Prostate gland (tissue), 2 donors: ENCODE measurements at regions of chr22 and their contacts with region 1.

Region 1: DNA sequence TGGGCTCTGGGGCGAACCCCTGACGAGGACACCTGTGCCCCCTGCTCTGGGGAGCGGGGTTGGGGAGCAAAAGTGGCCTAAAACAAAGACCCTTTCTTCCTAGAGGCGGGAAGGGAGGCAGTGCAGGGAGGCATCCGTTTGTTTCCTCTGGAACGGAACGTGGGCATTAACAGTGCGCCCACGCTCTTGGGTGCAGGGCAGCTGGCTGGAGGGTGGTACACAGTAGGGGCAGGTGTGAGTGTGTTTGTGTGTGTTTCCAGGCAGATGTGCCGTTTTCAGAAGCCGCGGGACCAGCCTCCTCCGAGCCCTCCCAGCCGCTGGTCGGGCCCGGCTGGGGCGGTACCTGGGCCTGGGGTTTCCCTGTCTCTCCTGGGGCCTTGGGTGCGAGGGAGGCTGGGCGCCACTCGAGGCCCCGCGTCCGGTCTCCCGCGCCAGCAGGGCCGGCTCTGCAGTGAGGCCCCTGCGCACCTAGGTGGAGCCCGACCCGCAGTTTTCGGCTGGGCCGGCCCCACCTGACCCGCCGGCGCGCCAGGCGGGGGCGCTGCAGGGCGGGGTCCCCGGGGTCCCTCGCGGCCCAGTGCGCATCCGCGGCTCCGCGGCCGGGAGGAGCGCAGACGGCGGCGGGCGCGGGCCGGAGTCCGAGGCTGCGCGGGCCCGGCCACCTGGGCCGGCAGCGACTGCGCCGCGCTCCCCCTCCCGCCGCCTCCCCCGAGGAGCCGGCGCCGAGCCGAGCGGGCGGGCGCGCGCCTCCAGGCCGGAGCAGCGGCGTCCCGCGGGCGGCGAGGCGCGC is 1252.7 kb downstream of the BRD1 start:
- DNase-seq: peak; percentile 40
- H3K4me3 ChIP-seq: no peak overlapping the region
- H3K27ac ChIP-seq: no peak overlapping the region
- H3K4me1 ChIP-seq: no peaks in the 10 kb centered on the region
- H3K27me3 ChIP-seq: no peaks in the 10 kb centered on the region
- CTCF ChIP-seq: peak; percentile 18 to 81 (median 54)
- POLR2A ChIP-seq: no peak

Region 2: GRCh38 chr22:48618326-48618725 is 43.4 kb after region 1 on chr22:
- intact Hi-C with region 1: no loop called
- DNase-seq: peak; percentile 87
- H3K4me3 ChIP-seq: no peak overlapping the region
- H3K27ac ChIP-seq: peak overlapping the region in 1 of 2 donors; percentile 52
- H3K4me1 ChIP-seq: peaks cover 13% of the 10 kb centered on the region
- H3K27me3 ChIP-seq: no peaks in the 10 kb centered on the region
- CTCF ChIP-seq: no peak
- POLR2A ChIP-seq: no peak

Region 3: GRCh38 chr22:48837341-48837935 is 262.5 kb after region 1 on chr22:
- intact Hi-C with region 1: no loop called
- DNase-seq: no peak
- H3K4me3 ChIP-seq: no peak overlapping the region
- H3K27ac ChIP-seq: no peak overlapping the region
- H3K4me1 ChIP-seq: no peaks in the 10 kb centered on the region
- H3K27me3 ChIP-seq: peaks cover 2% of the 10 kb centered on the region
- CTCF ChIP-seq: no peak
- POLR2A ChIP-seq: no peak

Region 4: GRCh38 chr22:48886604-48887393 is 311.8 kb after region 1 on chr22:
- intact Hi-C with region 1: no loop called
- DNase-seq: no peak
- H3K4me3 ChIP-seq: no peak overlapping the region
- H3K27ac ChIP-seq: no peak overlapping the region
- H3K4me1 ChIP-seq: no peaks in the 10 kb centered on the region
- H3K27me3 ChIP-seq: peaks cover 2% of the 10 kb centered on the region
- CTCF ChIP-seq: no peak
- POLR2A ChIP-seq: no peak

Region 5: DNA sequence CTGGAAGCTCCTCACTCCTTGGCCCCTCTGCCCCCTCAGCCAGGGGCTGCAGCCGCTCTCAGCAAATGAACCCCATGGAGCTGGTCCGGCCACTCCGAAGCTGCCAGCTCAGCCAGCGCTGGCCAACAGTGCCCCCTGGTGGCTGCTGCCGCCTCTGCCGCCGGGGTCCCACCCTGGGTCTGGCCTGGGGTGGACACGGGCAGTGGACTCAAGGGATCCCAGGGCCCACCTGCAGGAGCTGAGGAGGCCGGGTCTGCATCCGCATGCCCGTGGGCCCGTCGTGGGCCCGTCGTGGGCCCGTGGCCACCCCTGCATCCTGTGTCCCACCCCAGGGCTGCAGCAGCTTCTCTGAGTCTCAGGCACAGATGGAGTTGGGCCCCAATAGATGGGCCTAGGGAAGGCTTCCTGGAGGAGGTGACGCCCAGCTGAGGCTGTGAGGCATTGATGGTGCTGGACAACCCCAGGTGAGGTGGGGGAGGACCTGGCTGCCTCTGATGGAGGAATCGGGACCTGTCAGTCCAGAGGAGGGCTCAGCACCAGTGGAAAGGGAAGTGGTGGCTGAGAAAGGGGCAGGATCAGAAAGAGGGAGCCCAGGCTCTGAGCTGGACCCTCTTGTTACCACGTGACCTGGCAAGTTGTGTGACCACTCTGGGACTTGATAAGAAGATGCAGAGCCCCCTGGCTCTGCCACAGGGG is 730.4 kb after region 1 on chr22:
- intact Hi-C with region 1: loop called (anchors 5 kb)
- DNase-seq: peak; percentile 29
- H3K4me3 ChIP-seq: no peak overlapping the region
- H3K27ac ChIP-seq: no peak overlapping the region
- H3K4me1 ChIP-seq: no peaks in the 10 kb centered on the region
- H3K27me3 ChIP-seq: peaks cover 10% of the 10 kb centered on the region
- CTCF ChIP-seq: peak; percentile 74 to 93 (median 84)
- POLR2A ChIP-seq: no peak

Region 6: DNA sequence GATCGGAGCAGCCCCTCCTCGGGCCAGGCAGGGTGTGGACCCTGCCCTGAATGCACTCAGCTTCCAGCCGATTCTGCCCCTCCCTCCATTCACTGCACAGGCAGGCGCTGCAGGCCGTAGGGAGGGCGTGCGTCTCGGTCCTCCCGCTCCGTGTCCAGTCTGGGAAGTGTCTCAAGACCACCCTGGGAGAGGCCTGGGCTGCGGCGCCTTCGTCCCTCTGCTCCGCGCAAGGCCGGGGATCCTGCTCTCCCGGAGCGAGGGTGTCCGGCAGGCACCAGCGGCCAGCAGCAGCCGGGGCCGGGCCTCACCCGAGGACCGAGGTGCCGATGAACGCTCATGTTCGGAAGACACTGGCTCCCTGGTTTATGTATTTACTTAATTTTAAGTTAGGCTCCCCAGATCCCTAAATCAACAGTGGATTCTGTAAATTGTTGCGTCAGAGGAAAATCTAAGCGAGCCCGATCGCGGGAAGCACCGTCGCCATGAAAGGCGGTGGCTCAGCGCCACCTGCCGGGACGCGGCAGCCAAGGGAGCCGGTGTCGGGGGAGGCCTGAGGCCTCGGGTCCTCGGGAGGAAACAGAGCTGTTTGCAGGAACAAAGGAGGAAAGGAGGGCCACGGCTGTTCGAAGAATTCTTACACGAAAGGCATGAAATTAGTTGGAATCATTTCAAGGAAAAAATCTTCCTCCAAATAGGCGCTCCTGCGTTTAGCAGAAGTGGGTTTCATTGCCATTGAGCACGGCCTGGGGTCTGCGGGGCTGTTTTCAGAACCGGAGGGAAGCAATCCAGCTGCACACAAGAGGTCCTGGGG is 1057.4 kb after region 1 on chr22:
- intact Hi-C with region 1: loop called (anchors 10 kb)
- DNase-seq: peak; percentile 39
- H3K4me3 ChIP-seq: peak overlapping the region; percentile 12 to 23
- H3K27ac ChIP-seq: no peak overlapping the region
- H3K4me1 ChIP-seq: no peaks in the 10 kb centered on the region
- H3K27me3 ChIP-seq: peaks cover 7% of the 10 kb centered on the region
- CTCF ChIP-seq: peak; percentile 61 to 78 (median 71)
- POLR2A ChIP-seq: no peak